ENCODE measurements at regions of chr1 and their contacts with region 1.

Region 1: DNA sequence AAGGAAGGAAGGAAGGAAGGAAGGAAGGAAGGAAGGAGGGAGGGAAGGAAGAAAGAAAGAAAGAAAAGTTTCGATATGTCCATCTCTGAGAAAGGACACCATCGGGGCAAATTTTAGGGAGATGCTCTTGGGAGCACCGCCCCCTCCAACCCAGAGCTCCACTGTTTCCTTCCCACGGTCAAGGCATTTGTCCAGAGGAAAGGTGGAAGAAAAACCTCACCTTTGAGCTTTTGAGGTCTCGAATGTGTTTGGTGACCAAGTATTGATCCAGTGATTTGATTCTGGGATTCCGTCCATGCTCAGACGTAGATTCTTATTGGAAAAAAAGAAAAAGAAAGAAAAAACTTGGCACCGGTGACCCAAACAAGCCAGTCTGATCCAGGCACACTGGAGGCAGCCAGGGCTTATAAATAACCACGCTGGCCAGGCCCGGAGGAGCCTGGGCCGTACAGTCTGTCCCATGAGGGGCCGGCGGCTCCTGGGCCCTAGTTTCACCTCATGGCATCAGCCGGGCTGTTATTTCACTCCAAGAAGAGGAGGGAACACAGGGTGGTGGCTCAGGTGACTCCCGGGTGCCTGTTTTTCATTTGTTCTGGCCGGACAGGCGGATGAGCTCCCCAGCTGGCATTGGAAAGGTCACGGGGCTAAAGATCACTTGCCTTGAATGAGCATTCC is 36.1 kb upstream of the SLC25A33 start:
- DNase-seq: no peak
- ATAC-seq: no peak
- H3K4me3 ChIP-seq: no peak overlapping the region
- H3K4me3 Mint-ChIP-seq: no peak overlapping the region
- H3K27ac ChIP-seq: no peak overlapping the region
- H3K27ac Mint-ChIP-seq: no peak overlapping the region
- H3K4me1 ChIP-seq: no peaks in the 10 kb centered on the region
- H3K4me1 Mint-ChIP-seq: no peaks in the 10 kb centered on the region
- H3K27me3 ChIP-seq: peaks cover 0 to 12% of the 10 kb centered on the region in 2 experiments
- H3K27me3 Mint-ChIP-seq: peaks cover 0 to 18% of the 10 kb centered on the region in 2 donors

Region 2: DNA sequence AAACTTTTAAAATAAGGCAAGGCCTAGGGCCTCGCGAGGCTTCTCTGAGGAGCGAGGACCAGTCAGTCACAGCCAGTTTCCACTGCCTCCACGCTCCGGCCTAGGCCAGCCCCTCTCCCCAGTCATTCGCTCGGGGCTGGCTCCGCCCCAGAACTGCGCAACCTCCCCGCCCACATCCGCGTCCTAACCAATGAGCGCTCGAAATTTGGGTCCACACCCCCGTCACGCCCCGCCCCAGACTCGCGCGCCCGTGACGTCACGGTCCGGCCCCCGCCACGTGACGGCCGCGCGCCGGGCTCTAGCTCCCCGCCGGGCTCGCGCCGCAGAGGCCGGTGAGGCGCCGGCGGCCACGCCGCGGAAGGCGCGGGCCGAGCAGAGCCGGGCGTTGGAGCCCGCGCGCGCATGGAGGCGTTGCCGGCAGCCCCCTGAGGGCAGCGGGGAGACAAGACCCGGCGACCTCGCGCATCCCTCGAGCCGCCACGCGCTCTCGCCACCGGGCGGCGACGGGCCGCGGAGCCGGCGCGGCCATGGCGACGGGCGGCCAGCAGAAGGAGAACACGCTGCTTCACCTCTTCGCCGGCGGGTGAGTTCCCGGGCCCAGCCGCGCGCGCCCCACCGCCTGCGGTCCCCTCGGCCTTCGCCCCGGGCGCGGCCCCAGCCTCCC is 36.2 kb after region 1 on chr1 and contains the start of gene SLC25A33:
- CTCF ChIA-PET with region 1: no interaction called
- POLR2A ChIA-PET with region 1: no interaction called
- DNase-seq: peak; percentile 82 to 98 (median 92)
- ATAC-seq: peak; percentile 97 to 99 (median 98)
- H3K4me3 ChIP-seq: peak within 1 kb of the TSS; percentile 52 to 61
- H3K4me3 Mint-ChIP-seq: peak within 1 kb of the TSS; percentile 85 to 89 (median 87)
- H3K27ac ChIP-seq: peak within 1 kb of the TSS; percentile 65
- H3K27ac Mint-ChIP-seq: peak within 1 kb of the TSS; percentile 69 to 83
- H3K4me1 ChIP-seq: peaks cover 5 to 20% of the 10 kb centered on the region in 2 experiments
- H3K4me1 Mint-ChIP-seq: peaks cover 31 to 35% (median 33%) of the 10 kb centered on the region in 3 donors
- H3K27me3 ChIP-seq: no peaks in the 10 kb centered on the region
- H3K27me3 Mint-ChIP-seq: no peaks in the 10 kb centered on the region
- total RNA-seq, gene SLC25A33: 2.8 to 6.2 (median 4.4) TPM

Region 3: DNA sequence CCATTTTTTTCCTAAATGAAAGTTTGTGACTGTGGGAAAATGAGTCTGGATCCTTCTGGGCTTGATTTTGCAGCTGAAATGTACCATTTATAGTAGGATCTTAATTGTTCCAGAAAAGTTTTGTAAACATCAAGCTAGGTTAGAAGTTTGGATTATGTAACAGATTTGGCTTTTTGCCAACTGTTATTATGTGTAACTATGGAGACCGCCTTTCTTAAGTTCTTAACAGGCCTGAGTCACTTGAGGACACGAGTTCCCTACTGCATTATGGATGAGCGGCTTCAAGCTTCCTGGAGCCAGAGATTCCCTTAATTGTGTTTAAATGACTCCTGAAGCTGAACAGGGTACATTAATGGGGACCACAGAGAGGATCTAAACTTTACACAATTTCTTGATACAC is 58.3 kb after region 1 on chr1:
- CTCF ChIA-PET with region 1: no interaction called
- POLR2A ChIA-PET with region 1: interaction called in 1 of 2 experiments, 13 read pairs
- DNase-seq: peak in 2 of 35 experiments; percentile 16 to 66
- ATAC-seq: peak in 1 of 4 experiments; percentile 39
- H3K4me3 ChIP-seq: no peak overlapping the region
- H3K4me3 Mint-ChIP-seq: no peak overlapping the region
- H3K27ac ChIP-seq: no peak overlapping the region
- H3K27ac Mint-ChIP-seq: peak overlapping the region; percentile 21 to 59
- H3K4me1 ChIP-seq: peaks cover 22 to 28% of the 10 kb centered on the region in 2 experiments
- H3K4me1 Mint-ChIP-seq: peaks cover 35 to 41% (median 37%) of the 10 kb centered on the region in 3 donors
- H3K27me3 ChIP-seq: no peaks in the 10 kb centered on the region
- H3K27me3 Mint-ChIP-seq: no peaks in the 10 kb centered on the region

Measured in T-cell (primary cell).